ENCODE measurements at regions of chr5 and their contacts with region 1.

Region 1: GRCh38 chr5:160508780-160509361 is 87.2 kb downstream of the PTTG1 start:
- H3K4me3 ChIP-seq: no peak overlapping the region
- H3K27ac ChIP-seq: no peak overlapping the region
- H3K4me1 ChIP-seq: no peaks in the 10 kb centered on the region
- CTCF ChIP-seq: peak; percentile 81

Region 2: DNA sequence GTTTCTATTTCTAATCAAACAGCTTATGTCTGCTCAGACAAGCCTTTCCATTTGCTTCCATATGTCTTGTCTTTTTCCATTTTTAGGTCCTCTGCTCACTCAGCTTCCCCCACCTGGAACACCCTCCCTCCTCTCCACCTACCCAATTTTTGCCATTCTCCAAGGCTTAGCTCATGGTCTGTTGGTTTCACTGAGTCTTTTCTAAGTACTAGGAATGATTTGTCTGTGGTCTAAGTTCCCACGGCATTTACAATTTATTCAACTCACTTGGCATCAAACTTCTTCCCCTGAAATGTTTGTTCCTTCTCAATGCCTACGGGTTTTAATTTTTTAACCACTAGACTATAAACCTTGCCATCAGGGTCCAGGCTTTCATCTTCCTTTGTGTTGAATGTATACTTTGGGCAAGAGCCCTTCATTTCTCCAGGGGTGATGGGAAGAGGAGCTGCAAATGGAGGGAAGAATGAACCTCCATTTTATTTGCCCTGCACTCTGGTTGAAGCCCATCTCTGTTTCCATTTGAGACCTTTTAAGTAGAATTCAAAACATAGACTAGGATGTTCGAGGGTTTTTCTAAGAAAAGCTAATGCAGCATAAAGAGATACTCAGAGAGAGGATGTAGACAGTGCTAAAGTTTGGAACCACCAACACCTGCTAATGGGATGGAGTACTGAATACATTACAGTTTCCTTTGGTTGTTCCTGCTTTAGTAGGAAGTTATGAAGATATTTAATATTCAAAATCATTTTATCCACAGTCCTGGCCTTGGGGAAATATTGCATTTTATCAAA is 16.8 kb after region 1 on chr5:
- CTCF ChIA-PET with region 1: interaction called, 10 read pairs
- POLR2A ChIA-PET with region 1: no interaction called
- H3K4me3 ChIP-seq: no peak overlapping the region
- H3K27ac ChIP-seq: no peak overlapping the region
- H3K4me1 ChIP-seq: no peaks in the 10 kb centered on the region
- CTCF ChIP-seq: no peak

Measured in HEK293 (cell line).